ENCODE measurements at regions of chr3 and their contacts with region 1.

Region 1: GRCh38 chr3:125055913-125056745 is at the start of gene HEG1:
- DNase-seq: peak; percentile 93 to 96 (median 94)
- ATAC-seq: peak; percentile 83 to 93 (median 90)
- H3K4me3 ChIP-seq: peak within 1 kb of the TSS; percentile 73 to 97 (median 88)
- H3K27ac ChIP-seq: peak within 1 kb of the TSS; percentile 82 to 99 (median 94)
- H3K4me1 ChIP-seq: peaks cover 11 to 67% (median 56%) of the 10 kb centered on the region in 12 donors
- H3K27me3 ChIP-seq: no peaks in the 10 kb centered on the region
- CTCF ChIP-seq: no peak
- POLR2A ChIP-seq: peak in 1 of 2 donors; percentile 74
- total RNA-seq, gene HEG1: 68.1 to 211 (median 121) TPM

Region 2: DNA sequence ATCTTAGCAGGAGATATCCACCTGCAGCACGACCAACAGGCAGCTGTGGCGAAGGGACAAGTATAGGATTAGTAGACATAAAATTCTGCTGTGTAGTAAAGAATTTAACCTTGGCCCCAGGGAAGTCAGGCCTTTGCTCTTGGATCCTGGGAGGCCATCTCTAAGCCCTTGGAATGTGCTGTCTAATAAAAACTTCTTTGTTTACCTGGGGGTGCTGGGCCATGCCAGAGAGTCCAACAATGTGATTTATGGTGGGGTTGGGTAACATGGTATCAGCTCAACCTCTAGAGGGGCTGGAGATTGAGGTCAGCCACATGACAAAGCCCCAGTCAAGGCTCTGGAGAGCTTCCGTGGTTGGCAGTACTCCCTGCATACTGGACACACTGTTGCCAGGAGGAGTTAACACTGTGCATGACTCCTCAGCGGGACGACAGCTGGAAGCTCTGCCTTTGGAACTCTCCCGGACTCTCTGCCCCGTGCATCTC is 52.7 kb before region 1 on chr3:
- intact Hi-C with region 1: loop called in 8 of 10 experiments (anchors 2 to 10 kb)
- DNase-seq: peak in 4 of 5 donors; percentile 58 to 82 (median 67)
- ATAC-seq: peak; percentile 91 to 94 (median 92)
- H3K4me3 ChIP-seq: no peak overlapping the region
- H3K27ac ChIP-seq: peak overlapping the region; percentile 28 to 77 (median 60)
- H3K4me1 ChIP-seq: peaks cover 7 to 73% (median 53%) of the 10 kb centered on the region in 12 donors
- H3K27me3 ChIP-seq: no peaks in the 10 kb centered on the region
- CTCF ChIP-seq: no peak
- POLR2A ChIP-seq: no peak

Region 3: GRCh38 chr3:125011941-125012340 is 44.2 kb before region 1 on chr3:
- intact Hi-C with region 1: loop called in 3 of 10 experiments (anchors 5 to 10 kb)
- DNase-seq: no peak
- ATAC-seq: no peak
- H3K4me3 ChIP-seq: no peak overlapping the region
- H3K27ac ChIP-seq: no peak overlapping the region
- H3K4me1 ChIP-seq: peaks cover 0 to 31% (median 14%) of the 10 kb centered on the region in 12 donors
- H3K27me3 ChIP-seq: no peaks in the 10 kb centered on the region
- CTCF ChIP-seq: no peak
- POLR2A ChIP-seq: no peak

Region 4: GRCh38 chr3:125019271-125019670 is 36.9 kb before region 1 on chr3:
- intact Hi-C with region 1: loop called in 3 of 10 experiments (anchors 5 kb)
- DNase-seq: no peak
- ATAC-seq: peak in 1 of 4 donors; percentile 13
- H3K4me3 ChIP-seq: no peak overlapping the region
- H3K27ac ChIP-seq: no peak overlapping the region
- H3K4me1 ChIP-seq: peaks cover 0 to 66% (median 37%) of the 10 kb centered on the region in 12 donors
- H3K27me3 ChIP-seq: no peaks in the 10 kb centered on the region
- CTCF ChIP-seq: no peak
- POLR2A ChIP-seq: no peak

Region 5: DNA sequence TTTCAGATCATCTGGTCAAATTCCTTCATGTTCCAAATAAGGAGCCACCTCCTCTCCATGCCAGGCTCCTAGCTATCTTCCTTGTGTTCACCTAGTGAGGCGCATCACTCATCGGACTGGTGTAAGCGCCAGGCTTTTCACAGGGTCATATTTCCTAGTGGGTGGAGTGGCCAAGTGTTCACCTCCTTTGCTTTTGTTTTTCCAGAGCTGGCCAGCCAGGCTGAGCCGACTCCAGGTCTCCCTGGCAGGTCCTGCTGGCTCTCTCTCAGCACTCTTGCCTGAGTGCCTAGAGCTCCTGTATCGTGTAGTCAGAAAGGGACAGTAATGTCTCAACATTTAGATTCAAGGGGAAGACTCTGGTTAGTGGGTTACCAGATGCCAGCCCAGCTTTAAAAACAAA is 31.3 kb before region 1 on chr3:
- intact Hi-C with region 1: loop called in 1 of 10 experiments (anchors 5 kb)
- DNase-seq: peak; percentile 40 to 73 (median 66)
- ATAC-seq: peak; percentile 79 to 91 (median 88)
- H3K4me3 ChIP-seq: peak overlapping the region in 3 of 12 donors; percentile 2 to 16 (median 9)
- H3K27ac ChIP-seq: peak overlapping the region; percentile 44 to 83 (median 72)
- H3K4me1 ChIP-seq: peaks cover 0 to 80% (median 48%) of the 10 kb centered on the region in 12 donors
- H3K27me3 ChIP-seq: no peaks in the 10 kb centered on the region
- CTCF ChIP-seq: no peak
- POLR2A ChIP-seq: no peak

Region 6: DNA sequence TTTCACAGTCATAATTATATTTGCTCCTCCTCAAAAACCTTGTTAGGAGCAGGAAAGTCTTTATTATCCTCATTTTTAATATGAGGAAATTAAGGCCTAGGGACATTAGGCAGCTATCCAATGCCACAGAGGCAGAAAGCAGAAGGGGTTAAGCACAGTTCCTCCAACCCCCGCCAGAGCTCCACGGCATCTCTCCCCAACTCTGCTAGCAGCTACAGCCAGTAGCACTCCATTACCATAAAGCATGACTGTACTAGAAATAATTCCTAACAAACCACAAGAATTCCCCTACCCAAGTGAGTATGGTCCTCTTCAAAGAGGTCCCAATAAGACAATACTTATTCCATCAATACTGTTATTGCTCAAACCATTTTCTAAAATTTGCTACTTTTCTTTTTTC is 10.2 kb before region 1 on chr3:
- intact Hi-C with region 1: loop called in 1 of 10 experiments (anchors 1 kb)
- DNase-seq: no peak
- ATAC-seq: no peak
- H3K4me3 ChIP-seq: no peak overlapping the region
- H3K27ac ChIP-seq: peak overlapping the region in 10 of 12 donors; percentile 80 to 98 (median 92)
- H3K4me1 ChIP-seq: peaks cover 21 to 100% (median 97%) of the 10 kb centered on the region in 12 donors
- H3K27me3 ChIP-seq: no peaks in the 10 kb centered on the region
- CTCF ChIP-seq: no peak
- POLR2A ChIP-seq: no peak

Region 7: GRCh38 chr3:125141596-125142419 is 85.7 kb after region 1 on chr3:
- intact Hi-C with region 1: loop called in 9 of 10 experiments (anchors 2 to 10 kb)
- DNase-seq: peak; percentile 84 to 89 (median 86)
- ATAC-seq: peak; percentile 47 to 88 (median 76)
- H3K4me3 ChIP-seq: peak overlapping the region in 11 of 12 donors; percentile 22 to 58 (median 46)
- H3K27ac ChIP-seq: peak overlapping the region; percentile 66 to 96 (median 79)
- H3K4me1 ChIP-seq: peaks cover 10 to 74% (median 57%) of the 10 kb centered on the region in 12 donors
- H3K27me3 ChIP-seq: no peaks in the 10 kb centered on the region
- CTCF ChIP-seq: peak; percentile 27 to 71 (median 46)
- POLR2A ChIP-seq: peak in 1 of 2 donors; percentile 13

Measured in heart left ventricle (tissue), 16 donors.